ENCODE measurements at regions of chrX and their contacts with region 1.

Region 1: DNA sequence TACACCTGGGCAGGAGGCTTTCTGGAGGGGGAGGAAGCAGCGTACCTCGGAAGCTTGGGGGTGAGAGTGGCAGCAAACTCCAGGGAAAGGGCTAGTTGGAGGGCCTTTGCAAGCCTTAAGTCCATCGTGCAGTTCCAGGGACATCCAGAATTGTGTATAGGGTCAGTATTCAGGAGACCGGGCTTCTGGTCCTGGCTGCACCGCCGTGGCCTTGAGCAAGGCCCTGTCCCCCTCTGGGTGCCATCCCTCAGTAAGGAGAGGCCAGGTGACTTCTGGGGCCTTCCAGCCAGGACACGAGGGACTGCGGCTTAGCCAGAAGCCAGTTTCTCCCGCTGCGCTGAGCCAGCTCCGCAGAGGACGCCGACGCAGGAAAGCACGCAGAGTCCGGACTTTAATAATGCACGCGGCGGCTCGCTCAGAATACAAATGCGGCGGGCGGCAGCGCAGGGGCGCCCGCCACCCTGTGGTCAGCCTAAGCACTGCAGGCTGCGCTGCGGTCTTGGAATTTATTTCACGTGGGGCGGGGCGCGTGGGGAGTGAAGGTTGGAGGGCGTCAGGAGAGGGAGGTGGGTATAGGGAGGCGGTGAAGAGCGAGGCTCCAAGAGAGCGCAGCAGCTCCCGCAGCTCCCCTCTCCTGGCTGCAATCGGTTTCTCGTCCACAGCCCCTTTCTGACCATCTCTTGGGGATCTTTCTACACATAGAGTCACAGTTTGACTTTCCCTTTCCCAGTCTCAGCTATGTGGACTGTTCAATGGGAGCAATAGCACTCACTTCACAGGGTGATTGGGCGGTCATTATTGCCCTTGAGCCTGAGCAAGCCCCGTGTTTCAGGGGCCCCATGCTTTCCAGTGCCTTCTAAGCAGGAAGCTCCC is 94.1 kb upstream of the GPR50 start:
- DNase-seq: peak; percentile 73 to 82 (median 76)
- H3K4me3 ChIP-seq: peak overlapping the region in 1 of 3 donors; percentile 32
- H3K27ac ChIP-seq: no peak overlapping the region
- H3K4me1 ChIP-seq: no peaks in the 10 kb centered on the region
- H3K27me3 ChIP-seq: peaks cover 4% of the 10 kb centered on the region
- CTCF ChIP-seq: peak; percentile 93

Region 2: GRCh38 chrX:150772150-150772970 is 310.0 kb before region 1 on chrX:
- intact Hi-C with region 1: loop called (anchors 5 kb)
- DNase-seq: peak; percentile 62 to 89 (median 78)
- H3K4me3 ChIP-seq: no peak overlapping the region
- H3K27ac ChIP-seq: no peak overlapping the region
- H3K4me1 ChIP-seq: no peaks in the 10 kb centered on the region
- H3K27me3 ChIP-seq: no peaks in the 10 kb centered on the region
- CTCF ChIP-seq: peak; percentile 71